ENCODE measurements at regions of chr19 and their contacts with region 1.

Region 1: GRCh38 chr19:18058208-18059030 is 28.3 kb downstream of the IL12RB1 start:
- DNase-seq: peak; percentile 83
- H3K4me3 Mint-ChIP-seq: no peak overlapping the region
- H3K27ac Mint-ChIP-seq: peak overlapping the region; percentile 55
- H3K4me1 Mint-ChIP-seq: peaks cover 15% of the 10 kb centered on the region
- H3K27me3 Mint-ChIP-seq: no peaks in the 10 kb centered on the region

Region 2: DNA sequence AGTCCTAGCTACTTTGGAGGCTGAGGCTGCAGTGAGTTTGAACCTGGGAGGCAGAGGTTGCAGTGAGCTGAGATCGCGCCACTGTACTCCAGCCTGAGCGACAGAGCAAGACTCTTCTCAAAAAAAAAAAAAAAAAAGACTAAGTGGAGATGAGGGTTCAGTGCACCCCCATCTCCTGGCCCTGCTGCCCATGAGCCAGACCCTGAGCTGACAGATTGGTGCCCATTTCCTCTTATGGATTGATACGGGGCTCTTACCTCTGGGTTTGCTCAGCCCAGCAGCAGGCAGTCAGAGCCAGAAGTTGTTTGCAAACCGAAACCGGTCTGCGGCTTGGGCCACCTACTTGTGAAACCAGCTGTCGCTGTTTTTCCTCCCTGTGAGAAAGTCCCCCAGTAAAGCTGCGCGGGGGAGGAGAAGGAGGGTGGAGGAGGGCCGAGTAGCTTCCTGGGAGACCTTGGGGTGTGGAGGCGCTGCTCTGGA is 13.6 kb before region 1 on chr19:
- CTCF ChIA-PET with region 1: interaction called, 9 read pairs
- POLR2A ChIA-PET with region 1: interaction called, 15 read pairs
- DNase-seq: peak; percentile 93
- H3K4me3 Mint-ChIP-seq: peak overlapping the region; percentile 35
- H3K27ac Mint-ChIP-seq: peak overlapping the region; percentile 71
- H3K4me1 Mint-ChIP-seq: peaks cover 33% of the 10 kb centered on the region
- H3K27me3 Mint-ChIP-seq: peaks cover 39% of the 10 kb centered on the region